Activated CD8-positive, alpha-beta T cell treated with anti-CD3 and anti-CD28 coated beads, Interleukin-2, amount 10 ng/mL, durations not matched to agents 7 days and 5 days (primary cell): ENCODE measurements at regions of chr6 and their contacts with region 1.

Region 1: DNA sequence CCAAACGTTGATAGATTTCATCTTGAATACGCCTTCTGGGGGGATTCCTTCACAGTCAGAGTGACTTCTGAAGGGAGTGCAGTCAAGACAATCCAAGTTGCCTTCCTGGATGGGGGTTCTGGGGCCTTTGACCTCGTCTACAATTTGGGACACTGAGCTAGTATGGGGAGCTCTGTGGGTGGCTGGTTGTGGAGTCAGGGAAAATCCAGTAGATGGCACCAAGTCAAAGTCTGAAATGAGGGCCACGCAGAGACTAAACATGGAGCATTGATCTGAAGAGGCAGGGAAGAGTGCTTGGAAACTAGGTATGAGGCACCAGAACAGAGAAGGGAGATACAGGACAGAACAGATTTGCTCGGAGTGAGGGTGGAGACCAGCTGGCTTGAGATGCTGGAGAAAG is 43.6 kb upstream of the CCN6 start:
- DNase-seq: no peak
- ATAC-seq: peak; percentile 47
- H3K4me3 Mint-ChIP-seq: no peak overlapping the region
- H3K27ac Mint-ChIP-seq: no peak overlapping the region
- H3K4me1 Mint-ChIP-seq: no peaks in the 10 kb centered on the region
- H3K27me3 Mint-ChIP-seq: no peaks in the 10 kb centered on the region

Region 2: DNA sequence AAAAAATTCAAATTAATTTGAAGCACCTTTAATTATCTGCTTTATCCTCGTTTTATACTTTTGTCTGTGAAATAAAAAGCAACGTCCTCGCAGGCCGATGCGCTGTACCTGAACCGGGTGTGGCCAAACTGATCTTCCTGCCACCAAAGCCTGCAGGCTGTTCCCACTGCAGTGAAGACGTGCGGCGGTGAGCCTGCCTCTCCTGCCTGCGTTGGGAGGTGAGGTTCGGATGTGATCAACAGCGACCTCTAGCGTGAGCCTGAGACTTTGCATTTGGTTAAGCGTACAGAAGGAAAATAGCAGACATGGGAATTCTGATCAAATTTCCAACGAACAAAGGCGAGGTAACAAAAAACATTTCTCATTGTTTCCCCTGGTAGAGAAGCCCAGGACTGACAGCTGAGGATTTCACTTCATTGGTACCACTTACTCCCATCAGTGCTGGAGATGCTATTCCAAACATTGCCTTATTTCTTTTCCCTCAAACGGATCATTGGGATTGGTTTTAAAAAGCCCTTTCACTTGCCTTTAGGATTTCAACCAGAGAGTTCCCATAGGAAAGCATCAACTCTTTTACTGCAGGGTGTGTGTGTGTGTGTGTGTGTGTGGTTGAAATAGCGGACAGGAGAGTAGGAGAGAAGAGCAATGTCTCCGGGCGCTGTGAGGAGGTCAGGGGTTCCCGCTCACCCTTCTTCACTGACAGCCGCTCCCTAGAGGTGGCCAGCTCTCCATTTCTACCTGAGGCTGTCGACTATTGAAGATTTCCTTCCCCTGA is 13.1 kb before region 1 on chr6:
- CTCF ChIA-PET with region 1: interaction called, 10 read pairs
- POLR2A ChIA-PET with region 1: no interaction called
- DNase-seq: peak; percentile 85
- ATAC-seq: peak; percentile 85
- H3K4me3 Mint-ChIP-seq: peak overlapping the region; percentile 60
- H3K27ac Mint-ChIP-seq: peak overlapping the region; percentile 73
- H3K4me1 Mint-ChIP-seq: peaks cover 42% of the 10 kb centered on the region
- H3K27me3 Mint-ChIP-seq: no peaks in the 10 kb centered on the region

Region 3: GRCh38 chr6:112029045-112029822 is 18.9 kb after region 1 on chr6:
- CTCF ChIA-PET with region 1: interaction called, 61 read pairs
- POLR2A ChIA-PET with region 1: interaction called, 3 read pairs
- DNase-seq: peak; percentile 74
- ATAC-seq: no peak
- H3K4me3 Mint-ChIP-seq: no peak overlapping the region
- H3K27ac Mint-ChIP-seq: peak overlapping the region; percentile 78
- H3K4me1 Mint-ChIP-seq: peaks cover 44% of the 10 kb centered on the region
- H3K27me3 Mint-ChIP-seq: no peaks in the 10 kb centered on the region

Region 4: GRCh38 chr6:112037783-112038216 is 27.5 kb after region 1 on chr6:
- CTCF ChIA-PET with region 1: interaction called, 119 read pairs
- POLR2A ChIA-PET with region 1: no interaction called
- DNase-seq: no peak
- ATAC-seq: no peak
- H3K4me3 Mint-ChIP-seq: no peak overlapping the region
- H3K27ac Mint-ChIP-seq: no peak overlapping the region
- H3K4me1 Mint-ChIP-seq: peaks cover 34% of the 10 kb centered on the region
- H3K27me3 Mint-ChIP-seq: no peaks in the 10 kb centered on the region

Region 5: GRCh38 chr6:112049026-112049799 is 38.9 kb after region 1 on chr6:
- CTCF ChIA-PET with region 1: interaction called, 119 read pairs
- POLR2A ChIA-PET with region 1: no interaction called
- DNase-seq: no peak
- ATAC-seq: no peak
- H3K4me3 Mint-ChIP-seq: no peak overlapping the region
- H3K27ac Mint-ChIP-seq: no peak overlapping the region
- H3K4me1 Mint-ChIP-seq: peaks cover 4% of the 10 kb centered on the region
- H3K27me3 Mint-ChIP-seq: peaks cover 4% of the 10 kb centered on the region